ENCODE measurements at regions of chr2 and their contacts with region 1.

Region 1: GRCh38 chr2:27409321-27410073 is at the start of gene PPM1G:
- DNase-seq: peak; percentile 56 to 95
- H3K4me3 ChIP-seq: peak within 1 kb of the TSS; percentile 96 to 97
- H3K27ac ChIP-seq: peak within 1 kb of the TSS; percentile 80 to 91
- H3K4me1 ChIP-seq: peaks cover 6 to 12% of the 10 kb centered on the region in 2 donors
- H3K27me3 ChIP-seq: no peaks in the 10 kb centered on the region
- CTCF ChIP-seq: no peak
- total RNA-seq, gene PPM1G: 24.7 TPM

Region 2: GRCh38 chr2:27380626-27381545 is 28.6 kb before region 1 on chr2 and contains the start of gene ZNF513:
- intact Hi-C with region 1: loop called (anchors 2 kb)
- DNase-seq: peak; percentile 79 to 98
- H3K4me3 ChIP-seq: peak within 1 kb of the TSS; percentile 89 to 96
- H3K27ac ChIP-seq: peak within 1 kb of the TSS; percentile 89 to 90
- H3K4me1 ChIP-seq: peaks cover 0 to 16% of the 10 kb centered on the region in 2 donors
- H3K27me3 ChIP-seq: no peaks in the 10 kb centered on the region
- CTCF ChIP-seq: no peak
- total RNA-seq, gene ZNF513: 17.7 TPM